BJ (cell line): ENCODE measurements at regions of chr2 and their contacts with region 1.

Region 1: DNA sequence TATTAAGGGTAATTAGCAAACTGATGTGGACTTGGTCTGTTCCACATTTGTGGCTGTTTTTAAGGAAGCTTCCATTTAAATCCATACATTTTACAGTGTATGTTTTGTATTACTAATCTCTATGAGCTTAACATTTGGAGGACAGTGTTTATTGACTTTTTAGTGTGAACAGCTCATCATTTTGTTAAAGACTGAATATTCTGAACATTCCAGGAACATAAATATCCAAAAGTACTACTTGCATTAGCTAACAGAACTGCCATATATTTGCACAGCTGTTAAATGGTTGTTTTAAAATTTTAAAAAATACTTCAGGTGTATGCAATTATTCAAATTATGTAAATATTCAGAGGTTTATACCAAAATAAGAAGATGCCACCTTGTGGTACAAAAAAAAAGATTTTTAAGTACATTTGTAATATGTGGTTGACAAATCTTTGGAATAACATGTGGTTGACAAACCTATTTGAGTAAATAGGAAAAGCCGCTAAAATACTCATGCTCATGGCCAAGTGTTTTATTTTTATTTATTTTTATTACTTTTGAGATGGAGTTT is 439.7 kb upstream of the FANCL start:
- DNase-seq: no peak
- H3K4me3 ChIP-seq: no peak overlapping the region
- H3K27me3 ChIP-seq: no peaks in the 10 kb centered on the region
- CTCF ChIP-seq: no peak

Region 2: DNA sequence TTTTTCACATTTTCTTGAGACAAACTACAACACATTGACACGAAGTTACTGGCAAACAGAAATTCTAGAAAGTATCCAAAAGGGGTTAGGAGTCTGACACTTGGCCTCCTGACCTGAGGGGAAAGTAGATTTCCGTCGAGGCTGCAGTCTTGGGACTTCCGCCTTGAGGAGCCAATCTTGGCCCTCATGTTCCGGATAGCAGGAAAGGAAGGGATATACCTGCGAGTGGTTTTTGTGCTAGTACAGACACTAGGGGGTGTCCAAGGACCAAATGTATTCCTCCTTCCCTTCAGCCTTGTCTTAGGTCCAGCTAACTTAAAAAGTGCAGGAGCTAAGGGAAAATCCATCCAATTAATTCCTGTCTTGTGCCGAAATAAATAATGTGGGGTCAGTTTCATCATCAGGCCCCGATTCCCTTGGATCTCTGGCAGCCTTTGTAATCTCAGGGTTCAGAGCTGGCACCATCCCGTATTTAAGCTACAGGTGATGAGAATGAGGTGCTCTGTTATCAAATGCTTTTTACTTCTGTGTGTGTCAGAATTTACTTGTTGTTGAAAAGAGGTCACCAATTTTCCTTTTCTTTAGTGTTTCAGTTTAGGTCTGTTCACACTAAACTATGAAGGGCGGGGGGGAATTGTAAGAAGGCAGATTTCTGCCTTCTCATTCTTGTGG is 109.5 kb before region 1 on chr2:
- CTCF ChIA-PET with region 1: interaction called, 16 read pairs
- POLR2A ChIA-PET with region 1: no interaction called
- DNase-seq: no peak
- H3K4me3 ChIP-seq: no peak overlapping the region
- H3K27me3 ChIP-seq: no peaks in the 10 kb centered on the region
- CTCF ChIP-seq: peak; percentile 79

Region 3: GRCh38 chr2:58655152-58655551 is 25.7 kb before region 1 on chr2:
- CTCF ChIA-PET with region 1: no interaction called
- POLR2A ChIA-PET with region 1: no interaction called
- DNase-seq: no peak
- H3K4me3 ChIP-seq: no peak overlapping the region
- H3K27me3 ChIP-seq: peaks cover 2% of the 10 kb centered on the region; the same call in 1 of the 2 replicates
- CTCF ChIP-seq: no peak

Region 4: DNA sequence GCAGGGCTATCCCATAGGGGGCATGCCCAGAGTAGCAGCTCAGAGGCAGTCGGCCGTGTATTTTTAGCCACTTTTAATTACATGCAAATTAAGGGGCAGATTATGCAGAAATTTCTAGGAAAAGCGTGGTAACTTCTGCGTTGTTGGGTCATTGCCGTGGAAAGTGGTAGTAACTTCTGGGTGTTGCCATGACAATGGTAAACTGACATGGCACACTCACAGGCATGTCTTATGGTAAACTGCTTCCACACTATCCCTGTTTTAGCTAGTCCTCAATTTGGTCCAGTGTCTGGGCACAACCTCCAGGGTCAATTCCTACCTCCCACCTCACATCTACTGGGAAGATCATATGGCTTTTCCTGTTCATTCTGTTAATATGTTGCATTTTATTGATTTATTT is 10.8 kb before region 1 on chr2:
- CTCF ChIA-PET with region 1: no interaction called
- POLR2A ChIA-PET with region 1: no interaction called
- DNase-seq: no peak
- H3K4me3 ChIP-seq: no peak overlapping the region
- H3K27me3 ChIP-seq: no peaks in the 10 kb centered on the region
- CTCF ChIP-seq: no peak

Region 5: DNA sequence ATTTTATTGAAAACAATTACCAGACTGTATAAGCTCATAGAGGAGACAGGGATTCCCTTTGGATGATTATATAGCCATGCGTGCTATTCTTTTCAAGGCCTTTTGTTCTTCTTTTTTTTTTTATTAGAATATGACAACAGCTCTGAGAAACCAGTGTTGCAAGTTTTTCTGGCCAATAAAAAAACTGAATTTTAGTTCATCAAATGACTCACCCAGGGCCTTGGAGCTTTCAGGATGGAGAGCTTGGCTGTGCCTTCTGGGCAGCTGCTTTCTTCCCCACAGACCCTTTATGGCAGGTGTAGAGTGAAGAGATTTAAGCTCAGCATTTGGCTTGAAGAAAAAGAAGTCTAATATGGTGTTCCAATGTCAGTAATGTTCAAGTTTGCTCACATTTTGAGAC is 58.2 kb after region 1 on chr2:
- CTCF ChIA-PET with region 1: no interaction called
- POLR2A ChIA-PET with region 1: no interaction called
- DNase-seq: no peak
- H3K4me3 ChIP-seq: no peak overlapping the region
- H3K27me3 ChIP-seq: no peaks in the 10 kb centered on the region
- CTCF ChIP-seq: no peak